Activated T-helper 1 cell treated with anti-CD3 and anti-CD28 coated beads, Interleukin-12 subunit alpha, Interleukin-12 subunit beta, Interleukin-2, Interleukin-4 antibody, amounts not matched to agents 30 ng/mL and 10 ng/mL and 1 ng/mL, durations not matched to agents 14 hours and 24 hours and 36 hours (primary cell): ENCODE measurements at regions of chrX and their contacts with region 1.

Region 1: DNA sequence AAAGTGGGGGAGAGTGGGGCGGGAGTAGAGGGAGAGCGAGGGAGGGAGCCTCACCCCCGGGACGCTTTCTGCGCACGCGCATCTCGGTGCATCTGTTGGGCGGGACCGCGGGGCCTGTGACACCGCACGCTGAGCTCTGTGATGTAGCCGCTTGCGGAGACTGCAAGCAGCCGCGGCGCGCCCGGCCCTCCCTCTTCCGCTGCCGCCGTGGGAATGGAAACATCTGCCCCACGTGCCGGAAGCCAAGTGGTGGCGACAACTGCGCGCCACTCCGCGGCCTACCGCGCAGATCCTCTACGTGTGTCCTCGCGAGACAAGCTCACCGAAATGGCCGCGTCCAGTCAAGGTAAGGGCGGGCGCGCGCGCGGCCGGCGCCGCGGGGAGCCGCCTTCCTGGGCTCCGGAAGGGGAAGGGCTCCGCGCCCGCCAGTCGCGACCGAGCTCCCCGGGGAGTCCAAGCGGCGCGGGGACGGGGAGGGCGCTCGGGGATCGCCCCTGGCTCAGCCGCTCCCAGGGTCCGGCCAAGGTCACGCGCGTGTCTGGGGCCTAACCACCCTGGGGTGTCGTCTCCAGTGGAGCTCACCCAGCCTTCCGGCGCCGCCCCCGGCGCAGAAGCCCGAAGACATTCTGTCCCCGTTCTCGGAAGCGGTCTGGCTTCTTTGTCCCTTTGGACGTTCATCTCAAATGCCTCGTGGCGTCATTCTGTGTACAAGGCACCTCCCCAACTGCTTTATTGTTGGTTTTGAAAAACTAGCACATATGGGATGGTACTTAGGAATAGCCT is at the start of gene FUNDC2:
- DNase-seq: peak; percentile 92
- H3K4me3 Mint-ChIP-seq: peak within 1 kb of the TSS; percentile 89
- H3K27ac Mint-ChIP-seq: peak within 1 kb of the TSS; percentile 93
- H3K4me1 Mint-ChIP-seq: peaks cover 21% of the 10 kb centered on the region
- H3K27me3 Mint-ChIP-seq: peaks cover 4% of the 10 kb centered on the region
- total RNA-seq, gene FUNDC2: 74.1 and 79.1 TPM in 2 replicates

Region 2: DNA sequence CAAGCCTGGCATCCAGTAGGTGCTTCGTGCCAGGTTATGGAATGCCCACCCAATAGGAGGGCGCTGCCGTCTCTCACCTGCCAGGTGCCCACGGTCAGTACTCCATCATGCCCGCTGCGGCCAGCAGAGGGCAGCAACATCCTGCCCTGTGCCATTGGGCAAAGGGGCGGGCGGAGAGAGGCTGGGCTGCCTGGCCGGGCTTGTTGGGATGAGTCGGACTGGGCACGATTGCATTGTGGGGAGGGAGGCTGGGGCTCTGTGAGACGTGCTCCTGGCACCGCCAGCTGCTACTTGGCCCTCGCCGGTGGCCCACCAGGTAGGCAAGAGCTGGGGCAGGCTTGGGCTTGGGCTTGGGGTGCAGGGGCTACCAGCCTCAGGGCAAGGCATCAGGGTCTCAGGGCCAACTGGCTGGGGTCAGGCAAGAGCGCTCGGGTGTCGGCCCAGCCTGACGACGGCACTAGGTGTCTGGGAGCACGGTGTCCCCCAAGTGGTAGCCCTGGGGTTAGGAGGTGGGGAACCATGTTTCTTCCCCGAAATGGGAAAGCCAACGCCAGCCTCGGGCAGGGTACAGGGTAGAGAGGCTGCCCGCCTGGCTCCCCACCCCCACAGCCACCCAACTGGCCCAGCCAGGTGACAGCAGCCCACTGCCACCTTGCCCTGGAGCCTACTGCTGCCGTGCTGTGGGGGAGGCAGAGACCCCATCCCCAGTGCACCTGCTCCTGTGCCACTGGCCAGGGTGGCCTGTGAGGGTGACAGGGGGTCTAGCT is 1262.7 kb before region 1 on chrX and contains the start of gene PLXNB3:
- intact Hi-C with region 1: no loop called
- DNase-seq: peak; percentile 58
- H3K4me3 Mint-ChIP-seq: no peak within 1 kb of the TSS
- H3K27ac Mint-ChIP-seq: no peak within 1 kb of the TSS
- H3K4me1 Mint-ChIP-seq: peaks cover 5% of the 10 kb centered on the region
- H3K27me3 Mint-ChIP-seq: peaks cover 5% of the 10 kb centered on the region
- total RNA-seq, gene PLXNB3: 0.21 and 0.81 TPM in 2 replicates

Region 3: GRCh38 chrX:154804957-154805695 is 221.8 kb before region 1 on chrX and contains the start of gene MPP1:
- intact Hi-C with region 1: loop called (anchors 5 kb)
- DNase-seq: peak; percentile 73
- H3K4me3 Mint-ChIP-seq: peak within 1 kb of the TSS; percentile 82
- H3K27ac Mint-ChIP-seq: peak within 1 kb of the TSS; percentile 63
- H3K4me1 Mint-ChIP-seq: peaks cover 45% of the 10 kb centered on the region
- H3K27me3 Mint-ChIP-seq: no peaks in the 10 kb centered on the region
- total RNA-seq, gene MPP1: 27.8 and 28.7 TPM in 2 replicates

Region 4: GRCh38 chrX:154980330-154981096 is 46.4 kb before region 1 on chrX:
- intact Hi-C with region 1: loop called (anchors 1 kb)
- DNase-seq: peak; percentile 67
- H3K4me3 Mint-ChIP-seq: peak overlapping the region; percentile 79
- H3K27ac Mint-ChIP-seq: peak overlapping the region; percentile 72
- H3K4me1 Mint-ChIP-seq: peaks cover 15% of the 10 kb centered on the region
- H3K27me3 Mint-ChIP-seq: peaks cover under 1% of the 10 kb centered on the region

Region 5: DNA sequence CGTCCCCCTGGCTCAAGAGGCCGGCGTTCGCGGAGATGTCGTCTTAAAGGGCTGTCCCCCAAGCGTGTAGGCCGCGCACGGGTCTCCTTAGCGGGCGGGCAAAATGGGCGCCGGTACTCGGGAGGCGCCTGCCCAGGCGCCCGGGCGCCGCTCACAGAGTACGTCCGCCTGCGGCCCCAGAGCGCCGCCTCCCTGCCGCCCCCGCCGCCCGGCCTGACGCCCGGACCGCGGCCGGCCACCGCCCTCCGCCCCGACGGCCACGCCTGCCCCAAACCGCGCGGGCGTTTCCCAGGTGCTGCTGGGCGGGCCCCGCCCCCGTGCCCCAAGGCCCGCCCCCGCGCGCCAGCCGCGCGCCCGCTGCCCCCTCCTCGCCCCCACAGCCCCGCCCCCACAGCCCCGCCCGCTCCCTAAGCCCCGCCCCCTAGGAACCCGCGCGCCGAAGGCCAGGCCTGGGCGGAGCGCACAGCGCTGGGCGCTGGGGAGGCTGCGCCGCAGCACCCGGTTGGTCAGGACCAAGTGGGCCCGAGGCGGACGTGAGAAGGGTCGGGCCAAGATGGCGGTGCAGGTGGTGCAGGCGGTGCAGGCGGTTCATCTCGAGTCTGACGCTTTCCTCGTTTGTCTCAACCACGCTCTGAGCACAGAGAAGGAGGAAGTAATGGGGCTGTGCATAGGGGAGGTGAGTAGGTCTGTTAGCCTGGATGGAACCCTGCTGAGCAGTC is 44.2 kb after region 1 on chrX and contains the starts of genes BRCC3, CMC4 and MTCP1:
- intact Hi-C with region 1: loop called (anchors 1 kb)
- DNase-seq: peak; percentile 72
- H3K4me3 Mint-ChIP-seq: peak within 1 kb of the TSS; percentile 95
- H3K27ac Mint-ChIP-seq: peak within 1 kb of the TSS; percentile 93
- H3K4me1 Mint-ChIP-seq: peaks cover 50% of the 10 kb centered on the region
- H3K27me3 Mint-ChIP-seq: no peaks in the 10 kb centered on the region
- total RNA-seq, gene BRCC3: 28.9 and 30.5 TPM in 2 replicates
- total RNA-seq, gene CMC4: 1.3 and 3.0 TPM in 2 replicates
- total RNA-seq, gene MTCP1: 9.1 and 12.7 TPM in 2 replicates

Region 6: GRCh38 chrX:155263854-155264628 is 237.1 kb after region 1 on chrX and contains the start of gene RAB39B:
- intact Hi-C with region 1: loop called (anchors 1 kb)
- DNase-seq: peak; percentile 61
- H3K4me3 Mint-ChIP-seq: peak within 1 kb of the TSS; percentile 91
- H3K27ac Mint-ChIP-seq: peak within 1 kb of the TSS; percentile 57
- H3K4me1 Mint-ChIP-seq: peaks cover 22% of the 10 kb centered on the region
- H3K27me3 Mint-ChIP-seq: no peaks in the 10 kb centered on the region
- total RNA-seq, gene RAB39B: 11.4 and 12.5 TPM in 2 replicates

Region 7: DNA sequence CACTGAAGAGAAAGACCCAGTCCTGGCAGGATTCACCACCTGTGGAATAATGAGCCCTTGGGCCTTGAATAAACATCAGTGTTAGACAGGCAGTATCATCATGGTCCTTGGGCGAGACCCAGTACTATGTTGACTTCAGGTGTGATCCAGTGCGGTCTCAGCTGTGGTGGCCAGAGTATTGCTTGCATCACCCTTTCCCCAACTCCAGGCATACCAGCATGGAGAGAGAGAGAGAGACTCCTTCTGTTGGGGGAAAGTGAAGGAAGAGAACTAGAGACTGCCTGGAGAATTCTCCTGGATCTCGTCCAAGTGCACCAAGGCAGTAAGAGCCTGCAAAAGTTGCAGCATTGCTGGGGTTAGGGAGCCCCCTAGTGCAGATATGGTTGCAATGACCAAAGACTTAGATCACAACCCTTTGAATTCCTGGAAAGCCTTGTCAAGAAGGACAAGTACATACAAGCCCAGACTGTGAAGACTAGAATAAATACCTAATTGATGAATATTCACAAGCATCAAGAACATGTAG is 793.1 kb after region 1 on chrX:
- intact Hi-C with region 1: no loop called
- DNase-seq: peak; percentile 3
- H3K4me3 Mint-ChIP-seq: no peak overlapping the region
- H3K27ac Mint-ChIP-seq: no peak overlapping the region
- H3K4me1 Mint-ChIP-seq: no peaks in the 10 kb centered on the region
- H3K27me3 Mint-ChIP-seq: peaks cover 6% of the 10 kb centered on the region